Activated T-helper 2 cell treated with anti-CD3 and anti-CD28 coated beads, Interferon-gamma antibody, Interleukin-2, Interleukin-4, amounts not matched to agents 10 μg/mL and 5 μg/mL and 100 μg/mL, durations not matched to agents 14 hours and 24 hours and 36 hours (primary cell): ENCODE measurements at regions of chr5 and their contacts with region 1.

Region 1: GRCh38 chr5:74052441-74053221 is 426.6 kb downstream of the ARHGEF28 start:
- DNase-seq: no peak
- H3K4me3 Mint-ChIP-seq: no peak overlapping the region
- H3K27ac Mint-ChIP-seq: no peak overlapping the region
- H3K4me1 Mint-ChIP-seq: no peaks in the 10 kb centered on the region
- H3K27me3 Mint-ChIP-seq: peaks cover 6% of the 10 kb centered on the region

Region 2: DNA sequence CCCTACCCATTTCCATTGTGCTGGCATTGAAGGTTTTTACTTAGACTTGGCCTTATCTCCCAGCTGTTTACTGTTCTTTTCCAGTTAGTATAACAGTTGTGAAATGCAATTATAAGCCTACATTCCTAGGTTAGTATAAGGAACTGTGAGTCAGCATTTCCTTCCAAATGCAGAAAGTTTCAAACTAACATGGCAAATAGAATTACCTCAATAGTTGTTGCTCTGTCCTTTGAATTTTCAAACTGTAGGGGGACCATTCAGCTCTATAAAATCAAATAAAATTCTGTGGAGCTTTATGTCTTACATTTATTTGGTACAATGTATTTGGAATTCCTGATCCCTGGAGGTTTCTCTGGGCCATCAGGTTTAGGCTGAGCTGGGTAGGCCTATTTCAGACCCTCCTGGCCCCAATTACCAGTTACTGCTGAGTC is 379.5 kb before region 1 on chr5:
- intact Hi-C with region 1: no loop called
- DNase-seq: no peak
- H3K4me3 Mint-ChIP-seq: no peak overlapping the region
- H3K27ac Mint-ChIP-seq: no peak overlapping the region
- H3K4me1 Mint-ChIP-seq: no peaks in the 10 kb centered on the region
- H3K27me3 Mint-ChIP-seq: peaks cover 4% of the 10 kb centered on the region

Region 3: DNA sequence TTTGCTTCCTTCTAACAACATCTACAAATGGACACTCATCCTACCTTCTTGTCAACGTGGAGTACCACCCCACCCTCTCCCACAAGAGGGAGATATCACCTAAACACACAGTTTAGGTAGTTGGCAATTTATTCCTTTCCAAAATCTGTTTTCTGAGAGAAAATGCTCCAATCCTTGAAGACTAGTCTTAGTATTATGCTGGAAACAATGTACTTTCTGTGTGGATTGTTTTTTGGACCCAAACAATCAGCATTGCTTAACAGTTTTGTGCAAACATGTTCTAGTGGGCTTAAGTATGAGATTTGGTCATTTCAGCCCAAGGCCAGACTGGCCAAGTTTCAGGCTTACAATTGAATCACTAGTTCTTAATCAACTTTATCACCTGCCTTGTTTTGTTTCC is 67.5 kb before region 1 on chr5:
- intact Hi-C with region 1: no loop called
- DNase-seq: no peak
- H3K4me3 Mint-ChIP-seq: no peak overlapping the region
- H3K27ac Mint-ChIP-seq: no peak overlapping the region
- H3K4me1 Mint-ChIP-seq: no peaks in the 10 kb centered on the region
- H3K27me3 Mint-ChIP-seq: peaks cover 3% of the 10 kb centered on the region

Region 4: GRCh38 chr5:74040065-74040551 is 12.5 kb before region 1 on chr5:
- intact Hi-C with region 1: no loop called
- DNase-seq: no peak
- H3K4me3 Mint-ChIP-seq: no peak overlapping the region
- H3K27ac Mint-ChIP-seq: no peak overlapping the region
- H3K4me1 Mint-ChIP-seq: peaks cover 2% of the 10 kb centered on the region
- H3K27me3 Mint-ChIP-seq: peaks cover 13% of the 10 kb centered on the region

Region 5: GRCh38 chr5:74063821-74064220 is 11.2 kb after region 1 on chr5:
- intact Hi-C with region 1: no loop called
- DNase-seq: no peak
- H3K4me3 Mint-ChIP-seq: no peak overlapping the region
- H3K27ac Mint-ChIP-seq: no peak overlapping the region
- H3K4me1 Mint-ChIP-seq: peaks cover 5% of the 10 kb centered on the region
- H3K27me3 Mint-ChIP-seq: peaks cover 3% of the 10 kb centered on the region

Region 6: DNA sequence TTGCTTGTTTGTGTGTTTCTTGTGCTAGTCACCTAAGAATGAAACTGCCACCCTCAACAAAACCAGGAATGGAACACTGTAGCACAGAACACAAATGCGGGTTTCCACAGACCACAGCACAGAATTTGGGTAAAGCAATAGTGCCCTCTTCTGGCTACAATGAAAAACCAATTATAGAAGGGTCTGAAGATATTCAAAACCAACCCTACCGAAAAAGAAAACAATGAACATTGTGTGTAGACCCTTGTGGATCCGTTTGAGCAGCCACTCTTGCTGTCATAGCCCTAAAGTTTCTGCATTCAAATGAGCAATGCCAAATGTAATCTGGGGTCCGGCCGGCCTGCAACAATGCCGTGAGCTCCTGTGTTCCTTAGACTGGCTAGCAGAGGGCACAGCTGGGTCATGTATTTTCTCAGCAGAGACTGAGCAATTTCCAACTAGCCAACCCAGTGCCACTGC is 596.2 kb after region 1 on chr5:
- intact Hi-C with region 1: loop called (anchors 5 kb)
- DNase-seq: peak; percentile 11
- H3K4me3 Mint-ChIP-seq: no peak overlapping the region
- H3K27ac Mint-ChIP-seq: no peak overlapping the region
- H3K4me1 Mint-ChIP-seq: peaks cover 2% of the 10 kb centered on the region
- H3K27me3 Mint-ChIP-seq: peaks cover 39% of the 10 kb centered on the region